Aorta (tissue), 5 donors: ENCODE measurements at regions of chr5 and their contacts with region 1.

Region 1: GRCh38 chr5:164013077-164013670 is 507.8 kb downstream of the MAT2B start:
- DNase-seq: no peak
- ATAC-seq: no peak
- H3K4me3 ChIP-seq: no peak overlapping the region
- H3K27ac ChIP-seq: no peak overlapping the region
- H3K4me1 ChIP-seq: no peaks in the 10 kb centered on the region
- H3K27me3 ChIP-seq: no peaks in the 10 kb centered on the region

Region 2: GRCh38 chr5:164504141-164504772 is 491.1 kb after region 1 on chr5:
- intact Hi-C with region 1: loop called (anchors 5 to 10 kb)
- DNase-seq: no peak
- ATAC-seq: no peak
- H3K4me3 ChIP-seq: no peak overlapping the region
- H3K27ac ChIP-seq: no peak overlapping the region
- H3K4me1 ChIP-seq: no peaks in the 10 kb centered on the region
- H3K27me3 ChIP-seq: no peaks in the 10 kb centered on the region

Region 3: GRCh38 chr5:164921722-164922121 is 908.5 kb after region 1 on chr5:
- intact Hi-C with region 1: no loop called
- DNase-seq: no peak
- ATAC-seq: no peak
- H3K4me3 ChIP-seq: no peak overlapping the region
- H3K27ac ChIP-seq: no peak overlapping the region
- H3K4me1 ChIP-seq: no peaks in the 10 kb centered on the region
- H3K27me3 ChIP-seq: no peaks in the 10 kb centered on the region

Region 4: DNA sequence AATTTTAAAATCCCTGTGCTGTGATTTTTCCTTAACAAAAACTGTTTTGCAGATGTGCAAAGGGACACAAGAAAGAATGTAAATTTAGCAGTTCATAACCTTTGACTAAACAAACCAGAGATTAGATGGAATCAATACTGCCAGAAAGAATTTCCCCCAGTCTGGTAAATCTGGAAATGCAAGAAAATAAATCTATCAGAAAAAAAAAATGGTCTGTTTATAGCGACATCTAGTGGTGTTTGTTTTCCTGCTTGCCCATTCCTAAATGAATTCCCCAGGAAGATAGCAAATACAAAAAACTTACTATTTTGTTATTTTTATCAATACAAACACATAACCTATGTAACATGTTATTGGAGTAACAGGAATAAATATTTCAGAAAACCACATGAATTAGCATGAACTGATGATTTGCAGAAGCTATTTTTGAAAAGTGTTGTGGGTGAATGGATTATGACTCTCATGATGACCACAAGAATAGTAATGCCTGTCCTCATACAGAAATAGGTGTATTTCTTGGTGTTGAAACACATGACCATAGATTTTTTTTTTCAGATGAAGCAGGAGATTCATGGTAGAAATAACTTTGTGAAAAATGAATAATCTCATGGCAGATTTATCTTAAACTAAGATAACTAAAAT is 1196.0 kb after region 1 on chr5:
- intact Hi-C with region 1: loop called in 1 of 2 experiments (anchors 10 kb)
- DNase-seq: no peak
- ATAC-seq: no peak
- H3K4me3 ChIP-seq: no peak overlapping the region
- H3K27ac ChIP-seq: no peak overlapping the region
- H3K4me1 ChIP-seq: no peaks in the 10 kb centered on the region
- H3K27me3 ChIP-seq: no peaks in the 10 kb centered on the region